Mammary epithelial cell (primary cell): ENCODE measurements at regions of chr17 and their contacts with region 1.

Region 1: DNA sequence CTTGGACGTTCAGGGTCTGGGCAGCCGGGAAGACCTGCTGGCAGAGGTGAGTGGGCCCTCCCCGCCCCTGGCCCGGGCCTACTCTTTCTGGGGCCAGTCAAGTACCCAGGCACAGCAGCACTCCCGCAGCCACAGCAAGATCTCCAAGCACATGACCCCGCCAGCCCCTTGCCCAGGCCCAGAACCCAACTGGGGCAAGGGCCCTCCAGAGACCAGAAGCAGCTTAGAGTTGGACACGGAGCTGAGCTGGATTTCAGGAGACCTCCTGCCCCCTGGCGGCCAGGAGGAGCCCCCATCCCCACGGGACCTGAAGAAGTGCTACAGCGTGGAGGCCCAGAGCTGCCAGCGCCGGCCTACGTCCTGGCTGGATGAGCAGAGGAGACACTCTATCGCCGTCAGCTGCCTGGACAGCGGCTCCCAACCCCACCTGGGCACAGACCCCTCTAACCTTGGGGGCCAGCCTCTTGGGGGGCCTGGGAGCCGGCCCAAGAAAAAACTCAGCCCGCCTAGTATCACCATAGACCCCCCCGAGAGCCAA is 8.6 kb upstream of the ABCC3 start:
- DNase-seq: peak; percentile 39
- H3K4me3 ChIP-seq: no peak overlapping the region
- H3K27ac ChIP-seq: no peak overlapping the region
- H3K4me1 ChIP-seq: no peaks in the 10 kb centered on the region
- H3K27me3 ChIP-seq: no peaks in the 10 kb centered on the region
- CTCF ChIP-seq: peak; percentile 62 to 80

Region 2: GRCh38 chr17:50547035-50547735 is 78.9 kb before region 1 on chr17 and contains the start of gene SPATA20:
- CTCF ChIA-PET with region 1: no interaction called
- dilution Hi-C with region 1: no loop called
- in situ Hi-C with region 1: no loop called
- intact Hi-C with region 1: loop called (anchors 1 kb)
- DNase-seq: peak; percentile 82
- H3K4me3 ChIP-seq: peak within 1 kb of the TSS; percentile 37 to 56 (median 55)
- H3K27ac ChIP-seq: peak within 1 kb of the TSS; percentile 23
- H3K4me1 ChIP-seq: peaks cover 21% of the 10 kb centered on the region
- H3K27me3 ChIP-seq: no peaks in the 10 kb centered on the region
- CTCF ChIP-seq: peak; percentile 95 to 99
- total RNA-seq, gene SPATA20: 65.6 to 79.9 TPM

Region 3: GRCh38 chr17:50661795-50662391 is 35.8 kb after region 1 on chr17:
- CTCF ChIA-PET with region 1: interaction called, 13 read pairs
- dilution Hi-C with region 1: no loop called
- in situ Hi-C with region 1: no loop called
- intact Hi-C with region 1: no loop called
- DNase-seq: peak; percentile 93
- H3K4me3 ChIP-seq: no peak overlapping the region
- H3K27ac ChIP-seq: peak overlapping the region; percentile 62
- H3K4me1 ChIP-seq: peaks cover 31% of the 10 kb centered on the region
- H3K27me3 ChIP-seq: no peaks in the 10 kb centered on the region
- CTCF ChIP-seq: no peak

Region 4: GRCh38 chr17:50689956-50690886 is 64.1 kb after region 1 on chr17:
- CTCF ChIA-PET with region 1: no interaction called
- dilution Hi-C with region 1: loop called (anchors 10 kb)
- in situ Hi-C with region 1: loop called in 1 of 2 experiments (anchors 10 kb)
- intact Hi-C with region 1: loop called (anchors 1 kb)
- DNase-seq: peak; percentile 66
- H3K4me3 ChIP-seq: no peak overlapping the region
- H3K27ac ChIP-seq: no peak overlapping the region
- H3K4me1 ChIP-seq: peaks cover 33% of the 10 kb centered on the region
- H3K27me3 ChIP-seq: no peaks in the 10 kb centered on the region
- CTCF ChIP-seq: no peak